Activated CD4-positive, alpha-beta T cell treated with anti-CD3 and anti-CD28 coated beads for 36 hours (primary cell): ENCODE measurements at regions of chr2 and their contacts with region 1.

Region 1: DNA sequence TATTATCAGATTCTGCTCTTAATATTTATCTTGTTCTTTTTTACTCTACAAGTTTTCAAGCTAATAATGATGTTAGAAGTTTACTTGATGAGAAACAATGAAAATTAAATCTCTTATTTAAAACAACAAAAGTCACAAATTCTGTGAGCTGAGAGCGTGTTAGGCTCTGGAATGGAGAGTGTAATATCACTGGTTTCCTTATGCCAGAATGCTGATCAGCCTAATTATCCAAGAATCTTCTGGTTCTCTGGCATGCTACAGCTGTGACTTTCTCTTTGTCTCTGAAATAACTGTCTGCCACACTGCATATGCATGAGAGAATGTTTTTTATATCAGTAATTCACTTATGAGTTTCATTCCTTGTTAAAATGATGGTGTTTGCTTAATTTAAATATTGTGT is 236.7 kb downstream of the PARD3B start:
- DNase-seq: no peak
- ATAC-seq: no peak
- H3K4me3 Mint-ChIP-seq: no peak overlapping the region
- H3K27ac Mint-ChIP-seq: no peak overlapping the region
- H3K4me1 Mint-ChIP-seq: no peaks in the 10 kb centered on the region
- H3K27me3 Mint-ChIP-seq: no peaks in the 10 kb centered on the region

Region 2: GRCh38 chr2:205405752-205406151 is 623.8 kb after region 1 on chr2:
- CTCF ChIA-PET with region 1: no interaction called
- POLR2A ChIA-PET with region 1: interaction called, 10 read pairs
- intact Hi-C with region 1: no loop called
- DNase-seq: no peak
- ATAC-seq: no peak
- H3K4me3 Mint-ChIP-seq: no peak overlapping the region
- H3K27ac Mint-ChIP-seq: no peak overlapping the region
- H3K4me1 Mint-ChIP-seq: no peaks in the 10 kb centered on the region
- H3K27me3 Mint-ChIP-seq: no peaks in the 10 kb centered on the region

Region 3: DNA sequence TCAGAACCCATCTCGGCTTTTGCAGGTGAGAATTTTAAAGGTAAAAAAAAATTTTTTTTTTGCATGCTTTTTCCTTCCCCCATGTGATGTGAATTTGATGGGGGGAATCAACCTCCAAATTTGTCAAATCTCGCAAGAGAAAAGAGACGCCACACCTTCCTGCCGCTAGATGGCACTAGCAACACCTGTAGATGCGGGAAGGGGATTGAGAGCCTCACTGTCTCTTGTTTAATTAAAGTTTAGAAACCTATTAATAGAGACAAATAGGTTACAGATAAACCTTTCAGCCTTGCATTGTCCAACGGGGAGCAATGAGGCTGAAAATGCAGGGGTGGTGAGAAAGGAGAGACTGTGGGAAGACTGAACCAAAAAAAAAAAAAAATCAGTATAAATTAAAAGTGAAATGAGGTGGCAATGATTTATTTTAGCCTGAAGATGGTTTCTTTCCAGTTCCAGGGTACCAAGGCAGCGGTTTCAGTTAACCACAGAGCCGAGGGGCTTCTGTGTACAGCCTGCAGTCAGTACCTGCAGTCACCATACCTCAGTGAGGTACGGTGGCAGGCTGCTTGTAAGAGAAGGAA is 984.9 kb after region 1 on chr2:
- CTCF ChIA-PET with region 1: no interaction called
- POLR2A ChIA-PET with region 1: no interaction called
- intact Hi-C with region 1: no loop called
- DNase-seq: peak; percentile 76
- ATAC-seq: peak; percentile 40
- H3K4me3 Mint-ChIP-seq: no peak overlapping the region
- H3K27ac Mint-ChIP-seq: no peak overlapping the region
- H3K4me1 Mint-ChIP-seq: peaks cover 13% of the 10 kb centered on the region
- H3K27me3 Mint-ChIP-seq: peaks cover 20% of the 10 kb centered on the region